Naive thymus-derived CD4-positive, alpha-beta T cell (primary cell): ENCODE measurements at regions of chr6 and their contacts with region 1.

Region 1: DNA sequence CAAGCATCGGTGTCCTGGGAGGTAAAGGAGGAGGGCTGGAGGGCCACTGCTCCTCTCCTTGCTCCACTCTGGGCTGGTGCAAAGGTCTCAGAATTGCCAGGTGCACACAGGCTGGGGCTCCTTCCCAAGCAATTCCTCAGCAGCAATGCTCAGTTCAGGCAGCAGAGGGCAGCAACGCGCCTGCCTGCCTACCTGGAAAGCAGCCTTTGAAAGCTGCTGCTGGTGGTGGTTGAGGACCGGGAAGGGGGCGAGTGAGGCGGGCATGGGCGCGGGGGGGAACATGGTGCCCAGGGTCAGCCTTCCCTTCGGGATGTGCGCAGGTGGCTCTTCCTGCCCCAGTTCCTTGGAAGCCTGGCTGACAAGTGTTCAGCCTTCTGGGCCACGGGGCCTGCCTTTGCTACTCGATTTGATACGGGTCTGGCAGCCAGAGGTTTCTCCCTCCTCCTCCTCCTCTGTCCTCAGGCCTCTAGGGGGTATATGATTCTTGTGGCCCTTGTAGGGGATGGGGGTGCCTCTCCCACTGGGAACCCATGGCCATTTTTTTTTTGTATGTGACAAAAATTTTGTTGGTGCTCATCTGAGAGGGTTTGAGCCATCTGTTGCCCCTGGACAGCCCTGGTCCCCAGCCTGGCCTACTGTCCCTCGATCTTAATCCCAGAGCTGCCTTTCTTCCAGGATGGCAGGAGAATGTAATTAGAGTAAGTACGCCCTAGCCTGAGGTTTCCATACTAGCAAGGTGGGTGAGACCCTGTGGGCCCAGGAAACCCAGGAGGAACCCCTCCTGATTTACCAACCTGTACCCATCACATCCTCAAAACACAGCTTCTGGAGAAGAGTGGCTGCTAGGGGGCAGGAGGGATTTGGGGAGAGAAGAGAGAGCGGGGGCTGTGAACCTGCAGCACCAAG is 20.1 kb downstream of the MRPS18A start:
- DNase-seq: peak; percentile 63 to 85 (median 77)
- ATAC-seq: peak; percentile 87
- H3K4me3 ChIP-seq: no peak overlapping the region
- H3K4me3 Mint-ChIP-seq: peak overlapping the region in 9 of 10 donors; percentile 23 to 79 (median 64)
- H3K27ac ChIP-seq: peak overlapping the region; percentile 10
- H3K27ac Mint-ChIP-seq: peak overlapping the region in 7 of 9 donors; percentile 22 to 89 (median 68)
- H3K4me1 ChIP-seq: peaks cover 8 to 9% of the 10 kb centered on the region in 2 donors
- H3K4me1 Mint-ChIP-seq: peaks cover 14 to 45% (median 18%) of the 10 kb centered on the region in 7 donors
- H3K27me3 ChIP-seq: no peaks in the 10 kb centered on the region
- H3K27me3 Mint-ChIP-seq: no peaks in the 10 kb centered on the region

Region 2: GRCh38 chr6:43635387-43636307 is 31.9 kb before region 1 on chr6 and contains the start of gene MAD2L1BP:
- CTCF ChIA-PET with region 1: no interaction called
- POLR2A ChIA-PET with region 1: no interaction called
- intact Hi-C with region 1: loop called in 1 of 2 experiments (anchors 1 kb)
- DNase-seq: peak; percentile 65 to 92 (median 88)
- ATAC-seq: peak; percentile 94
- H3K4me3 ChIP-seq: peak within 1 kb of the TSS; percentile 91
- H3K4me3 Mint-ChIP-seq: peak within 1 kb of the TSS; percentile 92 to 100 (median 99)
- H3K27ac ChIP-seq: peak within 1 kb of the TSS; percentile 87
- H3K27ac Mint-ChIP-seq: peak within 1 kb of the TSS; percentile 93 to 98 (median 96)
- H3K4me1 ChIP-seq: peaks cover 28 to 30% of the 10 kb centered on the region in 2 donors
- H3K4me1 Mint-ChIP-seq: peaks cover 34 to 65% (median 48%) of the 10 kb centered on the region in 7 donors
- H3K27me3 ChIP-seq: no peaks in the 10 kb centered on the region
- H3K27me3 Mint-ChIP-seq: peaks cover 0 to 3% (median 0%) of the 10 kb centered on the region in 5 donors
- total RNA-seq, gene MAD2L1BP: 25.2 to 44.5 (median 28.0) TPM

Region 3: GRCh38 chr6:43723737-43724295 is 56.3 kb after region 1 on chr6:
- CTCF ChIA-PET with region 1: interaction called, 3 read pairs
- POLR2A ChIA-PET with region 1: no interaction called
- intact Hi-C with region 1: loop called (anchors 2 kb)
- DNase-seq: peak; percentile 42 to 68 (median 60)
- ATAC-seq: peak; percentile 77
- H3K4me3 ChIP-seq: no peak overlapping the region
- H3K4me3 Mint-ChIP-seq: peak overlapping the region in 3 of 10 donors; percentile 55 to 67 (median 66)
- H3K27ac ChIP-seq: no peak overlapping the region
- H3K27ac Mint-ChIP-seq: peak overlapping the region in 3 of 9 donors; percentile 3 to 97 (median 67)
- H3K4me1 ChIP-seq: peaks cover 19 to 23% of the 10 kb centered on the region in 2 donors
- H3K4me1 Mint-ChIP-seq: peaks cover 20 to 38% (median 29%) of the 10 kb centered on the region in 7 donors
- H3K27me3 ChIP-seq: no peaks in the 10 kb centered on the region
- H3K27me3 Mint-ChIP-seq: peaks cover 0 to 7% (median 0%) of the 10 kb centered on the region in 5 donors

Region 4: GRCh38 chr6:43774776-43775534 is 107.5 kb after region 1 on chr6:
- CTCF ChIA-PET with region 1: interaction called, 3 read pairs
- POLR2A ChIA-PET with region 1: no interaction called
- intact Hi-C with region 1: loop called (anchors 1 to 2 kb)
- DNase-seq: peak in 7 of 9 donors; percentile 33 to 65 (median 43)
- ATAC-seq: peak; percentile 44
- H3K4me3 ChIP-seq: no peak overlapping the region
- H3K4me3 Mint-ChIP-seq: peak overlapping the region in 2 of 10 donors; percentile 14 to 68
- H3K27ac ChIP-seq: no peak overlapping the region
- H3K27ac Mint-ChIP-seq: peak overlapping the region in 2 of 9 donors; percentile 25 to 45
- H3K4me1 ChIP-seq: peaks cover 3 to 9% of the 10 kb centered on the region in 2 donors
- H3K4me1 Mint-ChIP-seq: peaks cover 5 to 49% (median 18%) of the 10 kb centered on the region in 7 donors
- H3K27me3 ChIP-seq: peaks cover 6 to 8% of the 10 kb centered on the region in 2 donors
- H3K27me3 Mint-ChIP-seq: peaks cover 0 to 17% (median 15%) of the 10 kb centered on the region in 5 donors

Region 5: GRCh38 chr6:43856005-43856765 is 188.7 kb after region 1 on chr6:
- CTCF ChIA-PET with region 1: no interaction called
- POLR2A ChIA-PET with region 1: no interaction called
- intact Hi-C with region 1: no loop called
- DNase-seq: no peak
- ATAC-seq: no peak
- H3K4me3 ChIP-seq: no peak overlapping the region
- H3K4me3 Mint-ChIP-seq: no peak overlapping the region
- H3K27ac ChIP-seq: no peak overlapping the region
- H3K27ac Mint-ChIP-seq: no peak overlapping the region
- H3K4me1 ChIP-seq: no peaks in the 10 kb centered on the region
- H3K4me1 Mint-ChIP-seq: no peaks in the 10 kb centered on the region
- H3K27me3 ChIP-seq: no peaks in the 10 kb centered on the region
- H3K27me3 Mint-ChIP-seq: no peaks in the 10 kb centered on the region